Heart right ventricle (tissue), 16 donors: ENCODE measurements at regions of chr7 and their contacts with region 1.

Region 1: GRCh38 chr7:5363729-5364128 is 59.9 kb downstream of the TNRC18 start:
- DNase-seq: no peak
- ATAC-seq: no peak
- H3K4me3 ChIP-seq: no peak overlapping the region
- H3K27ac ChIP-seq: no peak overlapping the region
- H3K4me1 ChIP-seq: peaks cover 0 to 23% (median 7%) of the 10 kb centered on the region in 9 donors
- H3K27me3 ChIP-seq: no peaks in the 10 kb centered on the region
- CTCF ChIP-seq: no peak

Region 2: GRCh38 chr7:5248201-5248885 is 115.4 kb before region 1 on chr7:
- intact Hi-C with region 1: loop called in 4 of 10 experiments (anchors 10 kb)
- DNase-seq: peak; percentile 59 to 76
- ATAC-seq: peak; percentile 72 to 95 (median 90)
- H3K4me3 ChIP-seq: no peak overlapping the region
- H3K27ac ChIP-seq: peak overlapping the region in 2 of 10 donors; percentile 7 to 51
- H3K4me1 ChIP-seq: peaks cover 0 to 7% (median 0%) of the 10 kb centered on the region in 9 donors
- H3K27me3 ChIP-seq: peaks cover 0 to 12% (median 0%) of the 10 kb centered on the region in 7 donors
- CTCF ChIP-seq: no peak

Region 3: DNA sequence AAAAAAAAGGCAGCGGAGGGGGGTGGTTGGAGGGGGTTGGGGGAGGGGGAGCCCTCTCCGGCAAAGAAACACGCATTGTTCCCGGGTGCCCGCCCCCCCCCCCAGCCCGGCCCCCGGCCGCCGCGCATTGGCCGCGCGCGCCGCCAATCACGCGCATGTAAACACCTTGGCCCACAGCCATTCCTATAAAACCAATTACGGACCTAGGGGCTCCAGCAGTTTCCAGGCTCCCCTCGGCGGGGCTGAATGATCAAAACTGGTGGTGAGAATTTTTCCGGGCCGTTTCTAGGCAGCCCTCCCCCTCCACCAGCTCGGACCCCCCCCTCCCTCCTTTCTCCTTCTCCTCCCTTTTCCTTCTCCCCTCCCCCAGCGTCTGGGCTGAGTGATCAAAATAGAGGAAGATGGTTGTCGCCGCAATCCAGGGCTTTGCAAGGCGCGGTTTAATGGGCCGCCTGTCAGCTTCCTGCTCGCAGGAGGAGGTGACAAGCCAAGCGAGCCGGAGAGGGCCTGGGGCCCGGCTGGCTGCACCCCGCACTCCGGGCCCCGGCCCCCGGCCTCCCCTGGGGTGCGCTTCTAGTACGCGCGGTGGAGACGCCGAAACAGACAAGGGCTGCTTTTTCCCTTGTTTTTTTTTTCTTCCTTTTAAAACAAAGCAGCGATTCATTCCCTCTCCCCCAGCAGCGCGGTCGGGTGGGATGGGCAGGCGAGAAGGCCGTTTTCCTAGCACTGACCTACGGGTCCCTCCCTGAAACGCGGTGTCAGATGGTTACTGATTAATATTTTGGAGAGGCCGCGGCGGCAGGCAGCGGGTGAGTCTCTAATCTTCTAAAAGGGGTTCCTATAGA is 60.3 kb after region 1 on chr7:
- intact Hi-C with region 1: loop called in 2 of 10 experiments (anchors 5 kb)
- DNase-seq: peak; percentile 92 to 98
- ATAC-seq: peak; percentile 22 to 49 (median 42)
- H3K4me3 ChIP-seq: peak overlapping the region; percentile 68 to 97 (median 88)
- H3K27ac ChIP-seq: peak overlapping the region; percentile 98 to 100 (median 99)
- H3K4me1 ChIP-seq: peaks cover 8 to 53% (median 24%) of the 10 kb centered on the region in 9 donors
- H3K27me3 ChIP-seq: peaks cover 0 to 23% (median 0%) of the 10 kb centered on the region in 7 donors
- CTCF ChIP-seq: no peak

Region 4: DNA sequence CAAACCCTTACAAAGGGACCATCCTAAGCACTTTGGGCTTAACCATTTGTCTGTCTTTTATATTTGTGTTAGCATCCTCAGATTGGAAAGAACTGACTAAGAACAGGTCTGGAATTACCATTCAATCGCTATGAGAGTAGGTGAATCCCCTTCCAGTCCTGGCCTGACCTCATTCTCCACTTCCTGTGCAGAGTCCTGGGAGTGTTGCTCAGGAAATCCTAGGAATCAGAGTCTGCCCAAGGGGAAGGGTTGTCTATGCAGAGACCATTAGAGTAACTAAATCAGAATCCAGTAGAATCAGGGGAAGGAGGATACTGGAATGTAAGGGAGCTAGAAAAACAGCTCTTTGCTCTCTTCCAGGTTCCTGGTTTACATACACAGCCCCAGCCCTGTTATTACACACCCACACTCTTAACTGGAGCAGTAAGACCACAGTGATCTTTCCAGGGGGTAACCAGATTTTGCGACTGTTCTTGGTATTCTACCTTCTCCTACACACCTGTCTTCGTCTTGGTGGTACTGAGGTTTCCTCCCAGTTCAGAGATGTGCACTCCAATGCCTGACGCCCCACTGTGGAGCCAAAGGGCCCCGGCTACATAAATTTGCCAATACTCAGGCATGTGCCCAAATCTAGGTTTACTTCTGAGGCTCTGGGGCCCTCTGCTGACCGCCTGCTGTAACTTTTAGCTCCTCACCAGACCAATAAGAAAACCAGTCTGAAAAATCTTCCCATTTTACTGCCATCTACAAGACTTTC is 314.0 kb after region 1 on chr7:
- intact Hi-C with region 1: loop called in 1 of 10 experiments (anchors 10 kb)
- DNase-seq: peak; percentile 63 to 76
- ATAC-seq: peak; percentile 77 to 91 (median 82)
- H3K4me3 ChIP-seq: peak overlapping the region in 1 of 10 donors; percentile 7
- H3K27ac ChIP-seq: peak overlapping the region in 8 of 10 donors; percentile 15 to 64 (median 52)
- H3K4me1 ChIP-seq: peaks cover 14 to 74% (median 63%) of the 10 kb centered on the region in 9 donors
- H3K27me3 ChIP-seq: no peaks in the 10 kb centered on the region
- CTCF ChIP-seq: peak; percentile 59 to 84 (median 77)

Region 5: GRCh38 chr7:5704534-5704922 is 340.8 kb after region 1 on chr7:
- intact Hi-C with region 1: loop called in 1 of 10 experiments (anchors 10 kb)
- DNase-seq: peak; percentile 61 to 85
- ATAC-seq: peak; percentile 31 to 83 (median 73)
- H3K4me3 ChIP-seq: no peak overlapping the region
- H3K27ac ChIP-seq: peak overlapping the region in 4 of 10 donors; percentile 43 to 66 (median 59)
- H3K4me1 ChIP-seq: peaks cover 0 to 51% (median 28%) of the 10 kb centered on the region in 9 donors
- H3K27me3 ChIP-seq: no peaks in the 10 kb centered on the region
- CTCF ChIP-seq: peak; percentile 85 to 97 (median 90)